Activated CD4-positive, alpha-beta T cell treated with anti-CD3 and anti-CD28 coated beads for 36 hours (primary cell): ENCODE measurements at regions of chr10 and their contacts with region 1.

Region 1: GRCh38 chr10:102641880-102642735 is 2.2 kb upstream of the TRIM8 start:
- DNase-seq: peak; percentile 99
- ATAC-seq: peak; percentile 72
- H3K4me3 Mint-ChIP-seq: peak overlapping the region; percentile 84
- H3K27ac Mint-ChIP-seq: peak overlapping the region; percentile 92
- H3K4me1 Mint-ChIP-seq: peaks cover 19% of the 10 kb centered on the region
- H3K27me3 Mint-ChIP-seq: no peaks in the 10 kb centered on the region

Region 2: DNA sequence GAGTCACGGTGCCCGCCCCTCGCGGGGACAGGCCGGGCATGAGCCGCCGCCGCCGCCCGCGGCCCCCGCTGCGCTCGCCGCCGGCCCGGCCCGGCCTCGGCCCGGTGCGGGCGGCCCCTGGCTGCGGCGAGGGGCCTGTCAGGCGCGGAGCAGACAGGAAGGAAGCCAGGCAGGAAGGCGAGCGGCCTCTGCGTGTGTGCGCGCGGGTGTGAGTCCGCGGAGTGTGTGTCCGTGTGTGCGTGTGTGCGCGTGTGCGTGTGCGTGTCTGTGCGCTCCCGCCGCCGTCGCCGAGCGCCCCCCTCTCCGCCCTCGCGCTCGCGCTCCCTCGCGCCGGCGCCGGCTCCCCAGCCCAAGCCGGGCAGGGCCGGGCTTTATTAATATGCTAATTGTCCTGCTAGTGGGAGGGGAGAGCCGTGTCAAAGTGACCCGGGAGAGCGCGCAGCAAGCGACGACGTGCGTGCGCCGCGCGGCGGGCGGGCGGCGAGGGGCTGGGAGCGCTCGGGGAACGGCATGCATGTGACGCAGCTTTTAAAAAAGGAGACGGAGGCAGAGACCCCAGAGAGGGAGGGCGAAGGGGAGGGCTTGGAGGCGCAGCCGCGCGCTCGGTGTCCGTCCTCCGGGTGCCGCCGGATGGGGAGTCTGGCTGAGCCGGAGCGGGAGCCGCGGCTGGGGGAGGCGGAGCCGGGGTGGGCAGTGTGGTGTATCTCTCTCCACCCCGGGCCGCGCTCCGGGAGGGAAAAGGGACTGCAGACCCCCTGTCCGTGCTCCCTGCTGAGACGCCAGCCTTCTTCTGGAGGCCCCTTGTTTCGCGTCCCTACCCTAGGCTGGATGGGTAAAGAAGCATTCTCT is 521.7 kb before region 1 on chr10 and contains the start of gene LDB1:
- CTCF ChIA-PET with region 1: no interaction called
- POLR2A ChIA-PET with region 1: no interaction called
- intact Hi-C with region 1: loop called in 1 of 2 experiments (anchors 2 kb)
- DNase-seq: peak; percentile 77
- ATAC-seq: peak; percentile 28
- H3K4me3 Mint-ChIP-seq: peak within 1 kb of the TSS; percentile 81
- H3K27ac Mint-ChIP-seq: peak within 1 kb of the TSS; percentile 97
- H3K4me1 Mint-ChIP-seq: peaks cover 51% of the 10 kb centered on the region
- H3K27me3 Mint-ChIP-seq: no peaks in the 10 kb centered on the region
- total RNA-seq, gene LDB1: 69.6 to 86.7 TPM

Region 3: GRCh38 chr10:102394079-102394800 is 247.9 kb before region 1 on chr10:
- CTCF ChIA-PET with region 1: interaction called, 5 read pairs
- POLR2A ChIA-PET with region 1: no interaction called
- intact Hi-C with region 1: loop called (anchors 1 to 10 kb)
- DNase-seq: peak; percentile 99
- ATAC-seq: peak; percentile 87
- H3K4me3 Mint-ChIP-seq: peak overlapping the region; percentile 95
- H3K27ac Mint-ChIP-seq: peak overlapping the region; percentile 99
- H3K4me1 Mint-ChIP-seq: peaks cover 41% of the 10 kb centered on the region
- H3K27me3 Mint-ChIP-seq: no peaks in the 10 kb centered on the region

Region 4: GRCh38 chr10:102660888-102661657 is 19.0 kb after region 1 on chr10:
- CTCF ChIA-PET with region 1: interaction called, 11 read pairs
- POLR2A ChIA-PET with region 1: interaction called, 9 read pairs
- intact Hi-C with region 1: loop called (anchors 1 kb)
- DNase-seq: peak; percentile 88
- ATAC-seq: peak; percentile 82
- H3K4me3 Mint-ChIP-seq: peak overlapping the region; percentile 48
- H3K27ac Mint-ChIP-seq: peak overlapping the region; percentile 80
- H3K4me1 Mint-ChIP-seq: peaks cover 45% of the 10 kb centered on the region
- H3K27me3 Mint-ChIP-seq: no peaks in the 10 kb centered on the region

Region 5: GRCh38 chr10:102853944-102854694 is 212.0 kb after region 1 on chr10 and contains the start of gene BORCS7:
- CTCF ChIA-PET with region 1: no interaction called
- POLR2A ChIA-PET with region 1: no interaction called
- intact Hi-C with region 1: loop called in 1 of 2 experiments (anchors 5 kb)
- DNase-seq: peak; percentile 94
- ATAC-seq: peak; percentile 100
- H3K4me3 Mint-ChIP-seq: peak within 1 kb of the TSS; percentile 95
- H3K27ac Mint-ChIP-seq: peak within 1 kb of the TSS; percentile 99
- H3K4me1 Mint-ChIP-seq: peaks cover 14% of the 10 kb centered on the region
- H3K27me3 Mint-ChIP-seq: no peaks in the 10 kb centered on the region
- total RNA-seq, gene BORCS7: 4.5 to 5.1 TPM

Region 6: GRCh38 chr10:103918053-103918846 is 1276.1 kb after region 1 on chr10 and contains the start of gene STN1:
- CTCF ChIA-PET with region 1: no interaction called
- POLR2A ChIA-PET with region 1: no interaction called
- intact Hi-C with region 1: loop called in 1 of 2 experiments (anchors 10 kb)
- DNase-seq: peak; percentile 98
- ATAC-seq: peak; percentile 93
- H3K4me3 Mint-ChIP-seq: peak within 1 kb of the TSS; percentile 96
- H3K27ac Mint-ChIP-seq: peak within 1 kb of the TSS; percentile 99
- H3K4me1 Mint-ChIP-seq: peaks cover 32% of the 10 kb centered on the region
- H3K27me3 Mint-ChIP-seq: no peaks in the 10 kb centered on the region
- total RNA-seq, gene STN1: 34.4 to 37.4 TPM